Caco-2 (cell line): ENCODE measurements at regions of chr11 and their contacts with region 1.

Region 1: DNA sequence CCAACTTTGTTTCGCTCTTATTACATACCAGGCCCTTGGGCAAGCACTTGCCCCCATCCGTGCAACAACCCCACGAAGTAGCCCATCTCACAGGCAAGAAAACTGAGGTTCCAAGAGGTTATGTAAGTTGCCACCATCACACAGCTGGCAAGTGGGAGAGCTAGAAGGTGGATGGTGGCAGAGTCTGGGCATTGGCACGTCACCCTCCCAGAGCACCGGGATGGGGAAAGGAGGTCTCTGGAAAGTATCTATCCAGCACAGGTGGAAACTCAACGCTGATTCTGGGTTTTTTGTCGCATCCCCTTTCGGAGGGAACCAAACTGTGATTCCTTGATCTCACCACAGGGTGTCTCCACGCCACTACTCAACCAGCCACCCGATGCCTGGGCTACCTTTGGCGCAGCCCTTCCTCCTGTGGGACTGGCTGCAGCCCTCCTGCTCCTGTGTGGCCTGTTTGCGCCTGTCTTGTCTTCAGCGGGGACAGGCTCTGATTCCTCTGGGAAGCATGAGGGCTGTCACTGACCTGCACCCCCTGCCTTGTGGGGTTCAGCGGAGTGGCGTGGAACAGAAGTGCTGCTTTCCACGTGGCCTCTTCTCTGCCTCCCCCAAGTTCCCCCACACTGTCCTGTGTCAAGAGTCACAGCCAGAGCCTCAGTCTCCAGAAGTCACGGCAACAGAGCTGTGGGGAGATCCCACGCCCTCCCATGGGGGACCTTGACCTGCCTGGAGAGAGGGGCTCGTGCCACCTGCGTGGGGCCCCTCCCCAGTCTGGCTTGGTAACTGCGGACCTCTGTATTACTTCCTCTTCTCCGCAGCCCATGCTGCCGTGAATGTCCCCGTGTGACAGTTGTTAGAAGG is 34.4 kb upstream of the TRIM29 start:
- DNase-seq: peak; percentile 87 to 88
- H3K4me3 ChIP-seq: no peak overlapping the region
- H3K4me3 Mint-ChIP-seq: no peak overlapping the region
- H3K27ac Mint-ChIP-seq: no peak overlapping the region
- H3K4me1 ChIP-seq: peaks cover 8% of the 10 kb centered on the region
- H3K4me1 Mint-ChIP-seq: no peaks in the 10 kb centered on the region
- H3K27me3 ChIP-seq: no peaks in the 10 kb centered on the region
- H3K27me3 Mint-ChIP-seq: peaks cover 9% of the 10 kb centered on the region
- CTCF ChIP-seq: peak; percentile 95 to 98

Region 2: DNA sequence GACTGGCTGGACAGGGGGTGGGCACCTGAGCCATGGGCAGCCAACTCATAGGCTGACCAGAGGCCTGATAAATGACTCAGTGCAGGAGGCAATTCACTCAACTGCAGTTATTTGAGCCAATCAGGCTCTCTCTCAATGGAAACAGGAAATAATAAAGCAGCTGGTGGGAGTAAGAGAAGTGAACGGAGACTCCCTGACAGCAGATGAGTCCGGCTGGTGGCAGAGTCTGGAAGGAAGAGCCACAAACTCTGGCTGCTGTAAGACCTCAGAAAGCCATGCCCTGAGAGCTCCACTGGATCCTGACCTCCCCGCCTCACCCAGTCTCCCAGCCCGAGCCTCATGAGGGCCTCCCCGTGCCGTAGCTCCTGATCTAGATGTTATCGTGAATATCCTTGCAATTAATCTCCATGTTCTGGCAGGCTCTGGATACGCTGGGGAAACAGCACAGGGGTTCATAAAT is 104.1 kb before region 1 on chr11:
- CTCF ChIA-PET with region 1: no interaction called
- POLR2A ChIA-PET with region 1: no interaction called
- intact Hi-C with region 1: no loop called
- DNase-seq: no peak
- H3K4me3 ChIP-seq: no peak overlapping the region
- H3K4me3 Mint-ChIP-seq: no peak overlapping the region
- H3K27ac Mint-ChIP-seq: no peak overlapping the region
- H3K4me1 ChIP-seq: no peaks in the 10 kb centered on the region
- H3K4me1 Mint-ChIP-seq: no peaks in the 10 kb centered on the region
- H3K27me3 ChIP-seq: peaks cover 2% of the 10 kb centered on the region; the same call in 1 of the 2 replicates
- H3K27me3 Mint-ChIP-seq: peaks cover 25% of the 10 kb centered on the region
- CTCF ChIP-seq: no peak

Region 3: DNA sequence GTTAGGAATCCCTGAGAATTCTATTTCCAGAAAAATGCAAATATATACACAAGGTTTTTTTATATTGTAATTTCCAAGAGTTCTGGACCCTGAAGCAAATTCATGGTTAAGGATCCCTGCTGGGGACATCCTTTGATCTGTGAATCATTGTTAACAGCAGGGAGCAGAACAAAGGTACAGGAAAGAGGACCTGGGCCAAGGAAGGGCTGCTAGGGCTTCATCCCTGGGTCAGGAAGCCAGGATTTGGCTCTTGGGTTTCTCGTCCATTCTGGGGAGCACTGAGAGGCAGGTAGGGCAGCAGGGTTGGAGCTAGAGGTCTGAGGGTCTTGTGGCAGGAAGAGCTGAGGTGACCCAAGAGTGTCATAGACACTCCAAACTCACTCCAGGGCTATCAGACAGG is 28.4 kb after region 1 on chr11:
- CTCF ChIA-PET with region 1: no interaction called
- POLR2A ChIA-PET with region 1: no interaction called
- intact Hi-C with region 1: no loop called
- DNase-seq: no peak
- H3K4me3 ChIP-seq: no peak overlapping the region
- H3K4me3 Mint-ChIP-seq: no peak overlapping the region
- H3K27ac Mint-ChIP-seq: no peak overlapping the region
- H3K4me1 ChIP-seq: peaks cover 13% of the 10 kb centered on the region
- H3K4me1 Mint-ChIP-seq: peaks cover 6% of the 10 kb centered on the region
- H3K27me3 ChIP-seq: no peaks in the 10 kb centered on the region
- H3K27me3 Mint-ChIP-seq: no peaks in the 10 kb centered on the region
- CTCF ChIP-seq: no peak

Region 4: DNA sequence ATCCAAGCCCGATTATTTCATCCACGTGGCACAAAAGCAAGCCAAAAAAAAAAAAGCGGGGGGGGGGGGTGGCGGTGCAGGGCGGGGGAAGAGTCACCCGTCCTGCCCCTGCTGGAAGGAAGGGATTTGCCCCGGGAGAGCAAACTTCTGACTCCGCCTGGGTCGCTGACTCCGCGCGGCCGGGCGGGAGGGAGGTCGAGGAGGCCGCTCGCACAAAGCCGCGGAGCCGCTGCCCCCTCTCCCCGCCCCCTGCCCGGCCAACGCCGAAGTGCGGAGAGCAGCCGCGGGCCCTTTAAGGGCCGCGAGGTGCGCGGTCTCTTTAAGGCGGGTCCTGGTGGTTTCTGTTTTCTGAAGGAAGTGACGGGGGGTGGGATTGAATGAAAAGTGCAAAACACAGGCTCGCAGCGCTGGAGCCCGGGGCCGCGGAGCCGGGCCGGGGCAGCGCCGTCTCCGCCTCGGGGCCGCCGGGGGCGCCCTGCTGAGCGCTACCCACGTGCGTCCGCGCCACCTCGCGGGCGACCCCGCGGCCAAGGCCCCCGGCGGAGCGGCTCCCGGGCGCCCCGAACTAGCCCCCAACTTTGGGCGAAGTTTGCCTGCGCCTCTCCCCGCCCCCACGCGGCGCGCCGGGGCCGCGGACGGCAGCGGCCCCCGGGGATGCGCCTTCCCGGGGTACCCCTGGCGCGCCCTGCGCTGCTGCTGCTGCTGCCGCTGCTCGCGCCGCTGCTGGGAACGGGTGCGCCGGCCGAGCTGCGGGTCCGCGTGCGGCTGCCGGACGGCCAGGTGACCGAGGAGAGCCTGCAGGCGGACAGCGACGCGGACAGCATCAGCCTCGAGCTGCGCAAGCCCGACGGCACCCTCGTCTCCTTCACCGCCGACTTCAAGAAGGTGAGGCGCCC is 38.6 kb after region 1 on chr11 and contains the start of gene OAF:
- CTCF ChIA-PET with region 1: interaction called, 3 read pairs
- POLR2A ChIA-PET with region 1: no interaction called
- intact Hi-C with region 1: loop called (anchors 1 kb)
- DNase-seq: peak; percentile 92
- H3K4me3 ChIP-seq: peak within 1 kb of the TSS; percentile 93
- H3K4me3 Mint-ChIP-seq: peak within 1 kb of the TSS; percentile 85
- H3K27ac Mint-ChIP-seq: peak within 1 kb of the TSS; percentile 84
- H3K4me1 ChIP-seq: peaks cover 30% of the 10 kb centered on the region
- H3K4me1 Mint-ChIP-seq: peaks cover 25% of the 10 kb centered on the region
- H3K27me3 ChIP-seq: no peaks in the 10 kb centered on the region
- H3K27me3 Mint-ChIP-seq: no peaks in the 10 kb centered on the region
- CTCF ChIP-seq: peak in 1 of 2 experiments; percentile 21
- total RNA-seq, gene OAF: 30.3 and 31.3 TPM in 2 replicates

Region 5: GRCh38 chr11:120229451-120230424 is 57.5 kb after region 1 on chr11:
- CTCF ChIA-PET with region 1: interaction called, 5 read pairs
- POLR2A ChIA-PET with region 1: no interaction called
- intact Hi-C with region 1: loop called (anchors 1 kb)
- DNase-seq: peak in 1 of 2 experiments; percentile 67
- H3K4me3 ChIP-seq: no peak overlapping the region
- H3K4me3 Mint-ChIP-seq: no peak overlapping the region
- H3K27ac Mint-ChIP-seq: no peak overlapping the region
- H3K4me1 ChIP-seq: no peaks in the 10 kb centered on the region
- H3K4me1 Mint-ChIP-seq: no peaks in the 10 kb centered on the region
- H3K27me3 ChIP-seq: peaks cover 3% of the 10 kb centered on the region; the same call in 1 of the 2 replicates
- H3K27me3 Mint-ChIP-seq: peaks cover 4% of the 10 kb centered on the region
- CTCF ChIP-seq: peak; percentile 88 to 91